Prostate gland (tissue), 2 donors: ENCODE measurements at regions of chr22 and their contacts with region 1.

Region 1: DNA sequence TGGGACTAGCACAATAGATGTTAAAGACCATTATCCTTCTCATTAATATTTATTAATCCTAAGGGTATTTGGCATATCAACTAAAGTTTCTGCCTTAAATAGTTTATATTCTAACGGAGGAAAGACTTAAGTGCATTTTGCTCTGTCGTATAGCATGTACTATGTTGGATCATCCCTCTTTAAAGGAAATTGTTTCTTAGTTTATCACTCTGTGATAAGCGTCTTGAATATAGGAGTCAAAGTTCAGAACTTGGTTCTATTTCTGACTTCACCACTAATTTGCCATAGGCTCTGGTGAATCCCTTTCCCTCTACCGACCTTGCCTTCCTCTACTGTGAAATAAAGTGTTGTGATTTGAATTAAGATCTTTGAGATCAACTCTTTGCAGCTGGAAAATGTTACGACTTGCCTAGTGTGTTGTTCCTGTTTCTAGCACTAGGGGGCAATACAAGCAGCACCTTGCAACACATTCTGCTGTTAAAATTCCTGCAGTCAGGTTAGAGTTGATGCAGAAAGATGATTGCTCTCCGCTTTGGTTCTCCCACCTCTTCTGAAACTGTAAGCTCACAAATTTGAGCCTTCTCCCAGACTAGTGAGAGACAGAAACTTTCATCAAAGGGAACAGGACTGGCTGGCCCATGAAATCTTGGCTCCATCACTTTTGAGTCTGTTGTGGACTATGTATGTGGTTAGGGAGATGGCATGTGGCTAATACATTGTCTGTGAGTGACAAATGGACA is 27.8 kb upstream of the ZNRF3 start:
- DNase-seq: peak; percentile 75
- H3K4me3 ChIP-seq: no peak overlapping the region
- H3K27ac ChIP-seq: no peak overlapping the region
- H3K4me1 ChIP-seq: no peaks in the 10 kb centered on the region
- H3K27me3 ChIP-seq: no peaks in the 10 kb centered on the region
- CTCF ChIP-seq: peak; percentile 69 to 95 (median 91)
- POLR2A ChIP-seq: no peak

Region 2: DNA sequence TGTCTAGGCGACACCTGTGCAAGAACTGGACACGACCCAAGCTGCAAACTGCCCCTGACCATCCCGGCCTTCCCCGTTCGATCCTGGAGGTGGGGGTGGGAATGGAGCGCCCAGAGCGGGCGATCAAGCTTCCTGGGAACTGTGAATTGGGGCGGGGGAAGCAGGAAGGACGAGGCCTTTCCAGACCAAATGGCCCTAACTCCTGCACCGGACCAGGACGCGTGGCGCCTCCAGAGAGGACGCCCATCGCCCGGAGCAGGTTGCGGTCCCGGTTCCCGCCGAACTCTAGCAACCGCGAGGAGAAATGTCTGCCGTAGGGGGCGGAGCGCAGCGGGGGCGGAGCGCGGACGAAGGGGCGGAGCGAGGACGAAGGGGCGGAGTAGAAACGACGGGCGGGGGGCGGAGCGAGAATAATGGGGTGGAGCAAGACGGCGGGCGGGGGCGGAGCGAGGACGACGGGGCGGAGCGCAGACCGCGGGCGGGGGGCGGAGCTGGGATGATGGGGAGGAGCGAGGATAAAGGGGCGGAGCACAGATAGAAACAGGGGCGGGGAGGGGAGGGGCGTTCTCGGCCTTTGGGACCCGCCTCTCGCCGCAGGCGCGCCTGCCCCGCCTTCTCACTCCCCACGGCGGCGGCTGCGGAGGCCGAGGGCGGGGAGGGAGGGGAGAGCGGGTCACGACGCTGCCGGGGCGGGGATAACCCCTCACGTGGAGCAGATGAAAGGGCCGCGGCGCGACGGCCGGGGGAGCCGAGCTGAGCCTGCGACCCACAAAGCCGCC is 27.5 kb after region 1 on chr22 and contains the start of gene ZNRF3:
- intact Hi-C with region 1: no loop called
- DNase-seq: peak; percentile 96
- H3K4me3 ChIP-seq: peak within 1 kb of the TSS; percentile 63 to 70
- H3K27ac ChIP-seq: peak within 1 kb of the TSS; percentile 62 to 75
- H3K4me1 ChIP-seq: peaks cover 3% of the 10 kb centered on the region
- H3K27me3 ChIP-seq: no peaks in the 10 kb centered on the region
- CTCF ChIP-seq: peak in 1 of 4 experiments; percentile 16
- POLR2A ChIP-seq: peak; percentile 52
- total RNA-seq, gene ZNRF3: 38.5 to 46.1 TPM

Region 3: DNA sequence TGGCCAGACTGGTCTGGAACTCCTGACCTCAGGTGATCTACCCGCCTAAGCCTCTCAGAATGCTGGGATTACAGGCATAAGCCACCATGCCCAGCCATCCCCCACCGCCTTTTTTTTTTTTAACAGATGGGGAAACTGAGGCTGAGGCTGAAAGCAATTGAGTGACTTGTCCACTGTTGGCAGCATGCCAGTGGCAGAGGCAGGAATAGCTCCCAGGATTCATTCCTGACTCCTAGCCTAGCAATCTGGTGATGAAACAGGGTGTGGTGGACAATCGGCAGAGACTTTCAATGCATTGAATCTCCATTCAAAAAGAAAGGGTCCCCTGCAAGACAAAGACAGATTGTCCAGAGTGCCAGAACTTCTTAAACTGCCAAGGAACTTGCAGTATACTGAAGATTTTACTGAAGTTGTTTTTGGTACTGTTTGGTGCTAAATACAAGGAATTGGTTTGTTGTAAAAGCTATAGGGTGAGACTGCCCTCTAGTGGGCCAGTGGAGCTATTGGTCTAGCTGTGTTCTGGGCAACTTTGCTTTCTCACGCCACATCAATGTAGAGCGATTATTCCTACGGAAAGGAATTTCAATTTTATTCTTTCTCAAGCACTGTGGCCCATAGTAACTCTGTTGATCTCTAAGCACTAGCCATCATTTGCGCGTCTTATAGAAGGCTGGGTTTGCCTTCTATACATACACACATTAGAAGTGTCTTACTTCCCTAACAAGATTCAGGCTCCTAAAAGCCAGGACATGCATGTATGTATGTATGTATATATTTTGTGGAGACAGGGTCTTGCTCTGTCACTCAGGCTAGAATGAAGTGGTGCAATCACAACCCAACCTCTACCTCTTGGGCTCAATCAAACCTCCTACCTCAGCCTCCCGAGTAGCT is 185.1 kb after region 1 on chr22:
- intact Hi-C with region 1: loop called (anchors 2 kb)
- DNase-seq: peak; percentile 73
- H3K4me3 ChIP-seq: no peak overlapping the region
- H3K27ac ChIP-seq: no peak overlapping the region
- H3K4me1 ChIP-seq: peaks cover 3% of the 10 kb centered on the region
- H3K27me3 ChIP-seq: no peaks in the 10 kb centered on the region
- CTCF ChIP-seq: peak; percentile 84 to 94 (median 94)
- POLR2A ChIP-seq: no peak

Region 4: DNA sequence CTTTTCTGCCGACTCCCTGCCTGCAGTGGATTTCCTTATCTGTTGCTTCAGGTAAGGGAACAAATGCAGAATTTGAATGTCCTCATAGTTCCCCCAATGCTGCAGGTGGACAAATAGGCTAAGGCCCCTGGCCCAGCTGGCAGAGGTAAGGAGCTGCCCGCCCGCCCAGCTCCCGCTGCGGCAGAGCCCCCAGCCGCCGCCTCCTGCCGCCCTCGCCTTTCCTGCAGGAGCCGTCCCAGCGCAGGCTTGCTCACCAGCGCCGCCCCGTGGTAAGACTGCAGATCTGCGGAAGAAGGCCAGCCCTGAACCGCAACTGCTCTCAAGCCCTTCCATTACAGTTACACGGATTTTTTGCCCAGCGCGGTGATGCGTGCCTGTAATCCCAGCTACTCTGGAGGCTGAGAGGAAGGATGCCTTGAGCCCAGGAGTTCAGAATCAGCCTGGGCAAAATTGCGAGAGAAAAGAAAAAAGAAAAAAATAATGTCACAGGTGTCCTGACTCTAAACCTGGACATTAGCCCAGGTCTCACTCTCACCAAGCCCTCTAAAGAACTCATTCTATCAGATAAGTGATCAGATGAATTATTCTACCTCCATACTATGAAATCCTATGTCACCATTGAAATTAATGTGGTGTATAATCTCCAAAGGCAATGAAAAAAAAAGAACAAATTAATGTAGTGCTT is 299.0 kb after region 1 on chr22:
- intact Hi-C with region 1: loop called (anchors 5 kb)
- DNase-seq: peak; percentile 51
- H3K4me3 ChIP-seq: no peak overlapping the region
- H3K27ac ChIP-seq: no peak overlapping the region
- H3K4me1 ChIP-seq: peaks cover 4% of the 10 kb centered on the region
- H3K27me3 ChIP-seq: no peaks in the 10 kb centered on the region
- CTCF ChIP-seq: peak; percentile 87 to 94 (median 93)
- POLR2A ChIP-seq: no peak

Region 5: DNA sequence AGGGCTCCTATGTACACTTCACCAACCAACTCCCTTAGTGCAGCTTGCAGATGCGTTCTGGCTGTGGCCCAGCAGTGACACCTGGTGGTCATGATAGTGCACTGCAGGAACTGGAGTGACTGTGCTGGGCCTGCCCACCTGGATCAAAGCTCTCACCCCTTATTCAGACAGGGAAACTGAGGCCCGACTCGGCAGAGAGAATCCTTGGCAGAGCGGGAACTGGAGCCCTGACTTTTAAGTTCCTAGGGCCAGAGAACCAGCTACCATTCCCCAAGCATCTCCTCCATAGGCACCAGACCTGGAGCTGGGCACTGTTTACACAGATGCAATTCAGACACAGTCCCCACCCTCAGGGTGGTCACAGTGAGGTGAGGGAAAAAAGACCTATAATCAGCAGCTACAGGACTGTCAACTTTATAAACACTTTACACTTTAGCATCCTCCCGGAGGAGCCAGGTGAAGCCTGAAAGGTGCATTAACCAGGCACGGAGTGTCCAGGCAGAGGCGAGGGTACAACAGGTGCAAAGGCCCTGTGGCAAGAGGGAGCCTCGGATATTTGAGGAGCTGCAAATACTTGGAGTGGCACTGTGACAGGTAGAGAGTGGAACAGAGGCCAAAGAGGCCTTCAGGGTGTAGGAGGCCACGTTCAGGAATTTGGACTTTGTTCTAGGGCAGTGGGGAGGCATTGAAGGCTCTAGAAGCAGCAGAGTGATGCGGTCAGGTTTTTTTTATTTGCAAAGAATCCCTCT is 390.3 kb after region 1 on chr22:
- intact Hi-C with region 1: loop called (anchors 5 kb)
- DNase-seq: peak; percentile 60
- H3K4me3 ChIP-seq: no peak overlapping the region
- H3K27ac ChIP-seq: no peak overlapping the region
- H3K4me1 ChIP-seq: no peaks in the 10 kb centered on the region
- H3K27me3 ChIP-seq: no peaks in the 10 kb centered on the region
- CTCF ChIP-seq: peak; percentile 89 to 93 (median 92)
- POLR2A ChIP-seq: no peak

Region 6: DNA sequence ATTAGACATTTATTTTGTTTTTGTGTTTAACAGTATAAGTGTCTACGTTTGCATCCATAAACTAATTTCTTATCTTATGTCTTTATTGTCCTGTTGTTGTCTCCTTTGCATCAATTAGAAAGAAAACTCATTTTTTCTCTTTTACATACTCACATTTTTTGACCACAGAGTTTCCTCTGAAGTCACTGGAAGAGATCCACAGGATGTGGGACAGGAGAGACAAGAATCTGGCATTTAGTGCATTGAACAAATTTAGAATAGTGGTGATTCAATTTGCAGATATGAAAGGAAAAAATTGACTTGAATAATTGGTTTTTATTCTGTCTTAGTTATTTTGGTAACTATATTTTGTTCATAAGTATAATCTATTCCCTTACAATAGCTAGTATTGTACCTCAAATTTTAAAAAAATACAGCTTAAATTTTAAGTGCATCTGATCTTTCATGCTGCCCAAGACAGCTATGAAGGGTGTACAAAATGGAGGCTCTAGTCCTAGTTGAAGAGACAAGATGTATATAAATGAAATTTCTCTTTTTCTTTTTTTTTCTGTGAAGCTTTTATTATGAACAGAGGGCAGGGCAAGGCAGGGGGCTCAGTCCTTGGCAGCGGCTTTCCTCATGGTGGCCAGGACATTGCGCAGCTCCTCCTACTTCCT is 1249.1 kb after region 1 on chr22:
- intact Hi-C with region 1: no loop called
- DNase-seq: no peak
- H3K4me3 ChIP-seq: no peak overlapping the region
- H3K27ac ChIP-seq: no peak overlapping the region
- H3K4me1 ChIP-seq: no peaks in the 10 kb centered on the region
- H3K27me3 ChIP-seq: no peaks in the 10 kb centered on the region
- CTCF ChIP-seq: no peak
- POLR2A ChIP-seq: no peak